Activated CD4-positive, alpha-beta memory T cell treated with anti-CD3 and anti-CD28 coated beads, Interleukin-2, amount 10 ng/mL, durations not matched to agents 7 days and 5 days (primary cell): ENCODE measurements at regions of chr3 and their contacts with region 1.

Region 1: DNA sequence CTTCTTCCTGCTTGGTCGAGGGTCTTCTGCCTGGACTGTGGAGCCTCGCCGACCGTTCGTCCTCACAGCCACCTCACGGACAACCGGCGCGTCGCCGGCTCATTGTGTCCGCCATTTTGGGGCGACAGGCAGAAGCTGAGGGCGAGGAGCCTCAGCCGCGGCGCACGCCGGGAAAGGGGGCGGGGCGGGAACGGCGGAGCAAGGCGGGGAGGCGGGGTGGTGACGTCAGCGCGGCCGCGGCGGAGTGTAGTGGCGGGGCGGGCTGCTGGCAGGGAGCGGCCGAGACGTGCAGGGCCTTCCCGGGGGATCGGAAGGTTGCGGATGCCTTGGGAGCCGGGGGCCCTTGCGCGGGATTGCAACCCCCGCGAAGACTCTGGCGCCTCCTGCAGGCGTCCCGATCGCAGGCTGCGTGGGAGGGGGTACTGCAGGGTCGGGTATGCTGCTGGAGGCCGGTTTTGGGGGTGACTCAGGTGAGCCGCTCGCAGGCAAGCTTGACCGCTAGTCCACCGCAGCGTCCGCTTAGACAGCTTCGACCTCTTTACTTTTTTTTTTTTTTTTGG is at the start of gene WDR82:
- DNase-seq: peak; percentile 98
- H3K4me3 Mint-ChIP-seq: peak within 1 kb of the TSS; percentile 96
- H3K27ac Mint-ChIP-seq: peak within 1 kb of the TSS; percentile 98
- H3K4me1 Mint-ChIP-seq: peaks cover 61% of the 10 kb centered on the region
- H3K27me3 Mint-ChIP-seq: no peaks in the 10 kb centered on the region
- total RNA-seq, gene WDR82: 131 TPM

Region 2: DNA sequence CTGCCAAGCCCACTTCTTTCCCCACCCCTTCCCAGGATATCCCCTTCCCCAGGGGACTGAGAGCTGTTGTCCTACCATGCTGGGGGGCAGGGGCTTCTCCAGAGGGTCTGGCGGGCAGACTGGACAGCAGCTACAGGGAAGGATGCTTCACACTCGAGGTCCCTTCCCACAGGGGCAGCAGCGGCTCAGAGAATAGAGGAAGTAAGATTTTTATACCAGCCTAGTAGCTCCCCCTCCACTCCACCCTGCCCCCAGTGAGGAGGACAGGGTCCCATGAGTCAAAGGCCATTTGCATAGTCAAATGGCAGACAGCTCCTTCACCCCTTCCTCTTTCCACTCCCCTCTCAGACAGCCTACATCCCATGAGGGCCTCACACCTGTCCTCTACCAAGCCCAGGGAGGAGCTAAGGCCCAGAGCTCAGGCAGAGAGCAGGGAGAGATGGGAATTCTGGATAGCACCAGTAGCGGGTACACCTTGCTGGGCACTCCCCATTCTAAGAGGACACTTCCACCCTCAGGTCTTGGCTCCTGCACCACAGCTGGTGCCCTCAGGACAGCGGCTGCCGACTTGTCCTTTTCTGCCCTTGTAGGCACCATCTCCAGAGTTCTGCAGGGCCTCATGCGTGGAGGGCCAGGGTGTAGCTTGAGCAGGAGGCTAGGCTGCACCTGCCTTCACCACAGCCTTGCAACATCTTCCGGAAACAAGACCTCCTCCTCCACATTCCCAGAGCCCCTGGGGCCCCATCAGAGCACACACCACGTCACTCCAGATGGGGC is 53.0 kb before region 1 on chr3 and contains the start of gene TLR9:
- CTCF ChIA-PET with region 1: interaction called, 50 read pairs
- POLR2A ChIA-PET with region 1: interaction called, 26 read pairs
- DNase-seq: no peak
- H3K4me3 Mint-ChIP-seq: no peak within 1 kb of the TSS
- H3K27ac Mint-ChIP-seq: peak within 1 kb of the TSS; percentile 68
- H3K4me1 Mint-ChIP-seq: peaks cover 58% of the 10 kb centered on the region
- H3K27me3 Mint-ChIP-seq: no peaks in the 10 kb centered on the region
- total RNA-seq, gene TLR9: 0.55 to 0.83 TPM

Region 3: GRCh38 chr3:52238761-52239701 is 39.6 kb before region 1 on chr3 and contains the start of gene TWF2:
- CTCF ChIA-PET with region 1: interaction called, 59 read pairs
- POLR2A ChIA-PET with region 1: interaction called, 1,001 read pairs
- DNase-seq: peak; percentile 87
- H3K4me3 Mint-ChIP-seq: peak within 1 kb of the TSS; percentile 95
- H3K27ac Mint-ChIP-seq: peak within 1 kb of the TSS; percentile 97
- H3K4me1 Mint-ChIP-seq: peaks cover 77% of the 10 kb centered on the region
- H3K27me3 Mint-ChIP-seq: no peaks in the 10 kb centered on the region
- total RNA-seq, gene TWF2: 118 to 119 TPM

Region 4: DNA sequence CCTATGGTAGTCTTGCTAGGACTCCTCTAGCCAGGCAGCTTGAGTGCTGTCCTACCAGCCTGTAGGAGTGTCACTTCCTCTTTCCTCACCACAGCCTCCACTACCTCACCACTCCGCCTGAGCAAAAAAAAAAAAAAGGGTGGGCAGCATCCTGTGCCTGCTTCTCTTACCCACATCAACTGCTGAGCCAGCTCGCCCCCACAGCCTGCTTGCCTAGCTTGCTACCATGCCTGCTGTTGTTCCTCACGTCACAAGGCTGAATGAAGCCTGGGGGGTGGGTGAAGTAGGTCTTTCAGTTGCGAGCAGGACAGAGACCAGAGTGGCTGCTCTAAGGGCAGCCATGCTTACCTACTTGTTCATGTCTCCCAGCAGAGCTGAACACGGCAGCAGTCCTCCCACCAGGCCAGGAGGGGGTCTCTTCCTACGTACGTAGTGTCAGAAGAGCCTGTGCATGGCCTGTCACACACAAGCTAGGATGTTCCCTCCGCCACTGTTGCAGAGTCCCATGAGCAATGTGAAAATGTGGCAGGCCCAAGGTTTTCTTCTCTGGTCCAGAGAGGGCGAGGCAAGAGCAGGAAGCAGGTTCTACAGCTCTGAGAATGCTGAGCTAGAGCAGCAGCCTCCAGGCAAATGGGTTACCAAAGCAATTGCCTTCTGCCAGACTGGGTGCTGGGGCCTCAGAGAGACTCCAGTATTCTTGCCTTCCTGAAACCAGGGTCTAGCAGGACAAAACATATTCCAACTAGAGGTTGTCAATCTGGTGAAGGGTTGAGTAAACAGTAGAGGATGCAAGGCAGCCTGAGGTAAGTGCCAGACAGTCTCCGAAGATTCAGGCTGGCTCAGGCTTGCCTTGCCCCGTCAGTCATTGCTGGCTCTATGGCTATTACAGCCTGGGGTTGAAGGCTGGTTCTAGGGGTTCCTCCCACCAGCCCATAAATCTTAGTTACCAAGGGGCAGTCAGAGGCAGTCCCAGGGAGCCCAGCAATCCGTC is 25.0 kb before region 1 on chr3:
- CTCF ChIA-PET with region 1: interaction called, 53 read pairs
- POLR2A ChIA-PET with region 1: interaction called, 1,001 read pairs
- DNase-seq: peak; percentile 87
- H3K4me3 Mint-ChIP-seq: peak overlapping the region; percentile 72
- H3K27ac Mint-ChIP-seq: peak overlapping the region; percentile 99
- H3K4me1 Mint-ChIP-seq: peaks cover 85% of the 10 kb centered on the region
- H3K27me3 Mint-ChIP-seq: no peaks in the 10 kb centered on the region

Region 5: DNA sequence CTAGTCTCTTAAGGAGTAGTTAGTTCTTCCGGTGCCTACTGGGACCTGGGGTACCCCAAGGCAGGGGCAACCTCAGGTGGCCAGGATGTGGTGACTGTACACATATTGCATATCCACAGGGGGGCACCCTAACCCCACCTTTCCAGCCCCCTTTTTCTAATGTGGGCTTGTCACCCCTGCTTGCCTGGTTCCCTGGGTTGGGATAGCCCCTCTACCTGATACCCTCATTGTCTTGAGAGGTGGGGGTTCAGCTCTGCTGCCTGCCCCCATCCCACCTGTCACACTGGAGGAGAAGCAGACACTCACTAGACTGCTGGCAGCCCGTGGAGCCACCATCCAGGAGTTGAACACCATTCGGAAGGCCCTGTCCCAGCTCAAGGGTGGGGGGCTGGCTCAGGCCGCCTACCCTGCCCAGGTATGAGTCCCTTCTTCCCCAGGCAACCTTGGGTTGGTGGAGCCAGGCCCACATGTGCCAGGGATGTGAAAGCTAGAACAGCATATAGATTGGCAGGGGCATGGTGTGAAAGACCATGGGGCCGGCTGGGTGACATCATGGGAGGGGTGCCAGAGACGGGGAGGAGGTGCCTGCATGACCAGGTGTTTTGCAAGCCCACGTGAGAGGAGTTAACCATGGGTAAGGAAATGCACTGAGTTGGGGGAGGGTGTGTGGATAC is 13.1 kb after region 1 on chr3:
- CTCF ChIA-PET with region 1: interaction called, 36 read pairs
- POLR2A ChIA-PET with region 1: interaction called, 135 read pairs
- DNase-seq: peak; percentile 47
- H3K4me3 Mint-ChIP-seq: no peak overlapping the region
- H3K27ac Mint-ChIP-seq: peak overlapping the region; percentile 35
- H3K4me1 Mint-ChIP-seq: peaks cover 33% of the 10 kb centered on the region
- H3K27me3 Mint-ChIP-seq: no peaks in the 10 kb centered on the region

Region 6: GRCh38 chr3:52366527-52366926 is 87.9 kb after region 1 on chr3:
- CTCF ChIA-PET with region 1: no interaction called
- POLR2A ChIA-PET with region 1: no interaction called
- DNase-seq: no peak
- H3K4me3 Mint-ChIP-seq: no peak overlapping the region
- H3K27ac Mint-ChIP-seq: no peak overlapping the region
- H3K4me1 Mint-ChIP-seq: no peaks in the 10 kb centered on the region
- H3K27me3 Mint-ChIP-seq: no peaks in the 10 kb centered on the region